ENCODE measurements at regions of chr19 and their contacts with region 1.

Region 1: GRCh38 chr19:36014029-36014924 is at the start of gene ALKBH6:
- DNase-seq: peak; percentile 99 to 100
- H3K4me3 ChIP-seq: peak within 1 kb of the TSS; percentile 58 to 76
- H3K27ac ChIP-seq: peak within 1 kb of the TSS; percentile 74 to 85
- H3K4me1 ChIP-seq: peaks cover 4 to 14% of the 10 kb centered on the region in 2 donors
- H3K27me3 ChIP-seq: no peaks in the 10 kb centered on the region
- CTCF ChIP-seq: no peak
- total RNA-seq, gene ALKBH6: 35.3 TPM

Region 2: DNA sequence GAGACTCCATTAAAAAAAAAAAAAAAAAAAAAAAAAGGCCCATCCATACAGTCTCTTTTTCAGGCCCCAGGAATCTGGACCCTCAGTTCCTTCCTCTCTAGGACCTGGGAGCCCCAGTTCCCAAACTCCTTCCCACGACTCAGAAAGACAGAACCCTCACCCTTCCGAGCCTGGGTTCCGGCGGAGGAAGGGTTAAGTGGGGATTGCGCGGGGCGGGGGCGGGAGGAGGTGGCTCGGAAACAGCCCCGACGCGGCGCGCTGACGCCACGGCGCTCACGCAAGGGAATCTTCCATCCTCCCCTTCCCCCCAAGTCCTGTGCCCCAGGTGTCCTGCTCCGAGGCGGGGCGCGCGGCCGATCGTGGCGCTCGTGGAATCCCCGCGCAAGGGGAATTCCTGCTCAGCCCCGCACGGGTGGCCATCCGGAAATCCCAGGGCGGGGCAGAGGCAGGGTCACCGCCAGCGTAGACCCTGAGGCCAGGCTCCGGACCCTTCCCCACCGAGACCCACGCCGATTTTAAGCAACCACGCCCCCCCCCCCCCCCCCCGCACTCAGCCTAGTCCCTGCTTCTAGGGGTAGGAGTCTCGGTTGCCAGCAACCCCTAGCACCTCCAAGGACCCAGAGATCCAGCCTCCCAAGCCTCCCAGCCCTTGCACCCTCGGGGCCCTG is 114.6 kb before region 1 on chr19:
- intact Hi-C with region 1: no loop called
- DNase-seq: peak in 1 of 2 donors; percentile 84
- H3K4me3 ChIP-seq: peak overlapping the region; percentile 76 to 84
- H3K27ac ChIP-seq: peak overlapping the region; percentile 74 to 76
- H3K4me1 ChIP-seq: peaks cover 3 to 10% of the 10 kb centered on the region in 2 donors
- H3K27me3 ChIP-seq: no peaks in the 10 kb centered on the region
- CTCF ChIP-seq: no peak

Region 3: DNA sequence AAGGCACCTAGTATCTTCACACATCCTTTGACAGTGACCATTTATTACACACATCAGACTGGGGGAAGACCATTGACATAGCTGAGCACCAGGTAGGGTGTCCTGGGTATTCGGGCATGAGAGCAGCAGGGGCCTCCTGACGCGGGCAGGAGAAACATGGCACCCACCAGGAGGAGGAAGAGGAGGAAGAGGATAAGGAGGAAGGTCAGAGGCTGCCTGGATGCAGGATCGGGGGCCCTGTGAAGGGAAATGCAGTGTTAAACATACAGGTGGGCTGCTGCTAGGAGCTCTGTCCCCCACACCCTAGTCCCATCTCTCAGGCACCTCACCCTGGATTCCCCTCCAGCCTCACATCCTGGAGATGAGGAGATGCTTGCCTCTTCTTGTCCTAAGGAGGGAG is 11.0 kb before region 1 on chr19:
- intact Hi-C with region 1: no loop called
- DNase-seq: no peak
- H3K4me3 ChIP-seq: no peak overlapping the region
- H3K27ac ChIP-seq: no peak overlapping the region
- H3K4me1 ChIP-seq: peaks cover 0 to under 1% of the 10 kb centered on the region in 2 donors
- H3K27me3 ChIP-seq: no peaks in the 10 kb centered on the region
- CTCF ChIP-seq: no peak

Region 4: DNA sequence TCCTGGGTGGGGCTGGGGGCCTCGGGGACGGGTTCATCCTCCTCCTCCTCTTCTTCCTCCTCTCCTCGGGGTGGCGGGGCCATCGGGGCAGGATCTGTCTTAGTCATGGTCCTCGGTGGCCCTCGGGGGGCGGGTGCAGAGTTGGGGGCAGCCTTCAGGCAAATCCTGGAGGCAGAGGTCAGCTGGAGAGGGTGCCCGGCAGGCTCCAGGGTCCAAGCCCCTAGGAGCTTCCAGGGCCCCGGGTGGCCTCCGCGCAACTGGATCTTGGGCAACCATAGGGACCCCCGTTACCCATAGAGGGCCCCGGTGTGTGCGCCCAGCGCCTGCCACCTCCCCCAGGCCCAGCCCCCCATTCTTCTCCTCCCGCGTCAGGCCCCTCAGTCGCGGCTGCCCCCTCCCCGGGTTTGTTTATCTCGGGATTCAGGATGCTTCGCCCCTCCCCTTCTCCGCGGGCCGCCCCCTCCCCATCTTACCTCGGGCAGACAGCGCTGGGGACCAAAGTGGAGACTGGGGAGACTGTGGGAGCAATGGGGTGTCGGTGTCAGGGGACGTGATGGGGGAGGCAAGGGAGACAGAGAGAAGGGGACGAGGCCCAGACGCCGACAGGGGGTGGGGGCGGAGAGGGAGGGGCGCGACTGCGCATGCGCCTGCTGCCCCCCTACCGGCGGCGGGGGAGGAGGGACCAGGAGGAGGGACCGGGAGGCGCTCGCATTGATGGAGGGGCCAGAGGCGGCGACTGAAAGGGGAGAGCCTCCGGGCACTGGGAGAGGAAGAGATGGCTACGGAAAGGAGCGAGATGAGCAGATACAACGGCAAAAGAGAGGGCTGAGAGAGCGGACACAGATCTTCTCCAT is 18.2 kb after region 1 on chr19 and contains the start of gene CLIP3:
- intact Hi-C with region 1: loop called (anchors 2 kb)
- DNase-seq: peak; percentile 12 to 81
- H3K4me3 ChIP-seq: peak within 1 kb of the TSS; percentile 67 to 95
- H3K27ac ChIP-seq: peak within 1 kb of the TSS; percentile 75 to 85
- H3K4me1 ChIP-seq: peaks cover 0 to 4% of the 10 kb centered on the region in 2 donors
- H3K27me3 ChIP-seq: no peaks in the 10 kb centered on the region
- CTCF ChIP-seq: no peak
- total RNA-seq, gene CLIP3: 43.2 TPM